Head of caudate nucleus (tissue), 42 donors: ENCODE measurements at regions of chr12 and their contacts with region 1.

Region 1: DNA sequence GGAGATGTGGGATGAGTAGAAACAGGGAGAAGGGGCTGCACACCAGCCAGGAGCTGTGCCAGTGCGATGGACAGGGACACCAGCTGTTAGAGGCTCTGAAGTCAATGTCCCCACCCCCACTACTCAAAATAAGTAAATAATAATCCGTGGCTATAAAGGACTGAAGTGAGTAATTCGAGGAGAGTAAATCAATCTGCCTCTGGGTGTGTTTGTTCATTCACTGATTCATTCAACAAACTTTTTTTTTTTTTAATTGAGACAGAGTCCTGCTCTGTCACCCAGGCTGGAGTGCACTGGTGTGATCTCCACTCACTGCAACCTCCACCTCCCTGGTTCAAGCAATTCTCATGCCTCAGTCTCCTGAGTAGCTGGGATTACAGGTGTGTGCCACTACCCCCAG is 363.6 kb downstream of the TMEM132D start:
- DNase-seq: no peak

Region 2: DNA sequence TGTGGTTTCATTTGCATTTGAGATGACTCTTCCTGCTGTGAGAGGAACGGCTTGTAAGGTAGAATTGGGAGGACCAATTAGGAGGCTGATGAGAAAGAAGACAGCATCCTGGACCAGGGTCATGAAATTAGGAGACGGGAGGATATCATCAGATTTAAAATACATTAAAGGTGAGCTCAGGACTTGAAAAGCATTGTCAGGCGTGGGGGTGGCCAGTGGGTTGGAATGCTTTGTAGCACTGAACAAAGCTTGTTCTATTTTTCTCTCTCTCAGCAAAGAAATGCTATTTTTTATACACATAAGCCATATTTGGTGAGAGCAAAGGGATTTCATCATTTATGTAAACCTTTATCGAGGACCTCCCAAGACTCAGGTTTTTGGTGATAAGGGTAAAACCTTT is 206.1 kb after region 1 on chr12:
- intact Hi-C with region 1: no loop called
- DNase-seq: peak in 19 of 42 donors; percentile 6 to 59 (median 27)

Region 3: DNA sequence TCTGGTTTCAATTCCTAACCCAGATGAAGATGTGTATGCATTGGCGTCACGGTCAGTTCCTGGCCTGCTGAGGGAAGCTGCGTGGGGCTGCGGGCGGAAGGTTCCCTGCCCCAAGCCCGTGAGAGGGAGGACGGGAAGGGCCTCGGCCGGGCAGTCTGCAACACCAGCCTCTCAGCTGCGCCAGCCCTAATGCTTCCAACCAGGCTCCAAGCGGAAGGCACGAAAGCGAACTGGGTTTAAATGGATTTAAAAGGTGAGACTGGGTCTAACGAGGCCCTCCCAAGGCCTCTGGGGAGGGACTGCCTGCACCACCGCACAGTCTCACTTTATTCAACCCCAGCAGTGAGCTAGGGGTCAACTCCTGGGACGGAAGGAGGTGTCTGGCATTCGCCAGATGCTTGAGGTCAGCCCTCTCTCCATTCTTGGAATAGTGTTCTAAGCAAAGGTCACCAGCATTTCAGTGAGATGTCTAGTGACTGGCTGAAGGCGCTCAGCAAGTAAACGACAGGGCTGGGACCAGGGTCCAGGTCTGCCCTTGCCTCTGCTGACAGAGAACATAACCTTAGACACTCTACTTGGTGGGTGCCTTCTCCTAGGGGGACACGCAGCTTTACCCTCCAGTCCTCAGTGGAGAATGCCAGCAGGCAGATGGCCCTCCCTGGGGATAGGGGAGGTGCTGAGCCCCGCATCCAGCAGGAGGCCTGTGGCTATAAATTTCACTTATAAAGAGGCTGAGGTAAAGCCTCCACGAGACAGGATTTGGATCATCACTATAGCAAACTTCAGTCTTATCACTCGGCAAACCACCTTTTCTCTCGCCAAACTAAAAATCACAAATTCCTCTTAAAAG is 889.6 kb after region 1 on chr12:
- intact Hi-C with region 1: loop called (anchors 10 kb)
- DNase-seq: peak in 6 of 42 donors; percentile 3 to 40 (median 8)